ENCODE measurements at regions of chr16 and their contacts with region 1.

Region 1: DNA sequence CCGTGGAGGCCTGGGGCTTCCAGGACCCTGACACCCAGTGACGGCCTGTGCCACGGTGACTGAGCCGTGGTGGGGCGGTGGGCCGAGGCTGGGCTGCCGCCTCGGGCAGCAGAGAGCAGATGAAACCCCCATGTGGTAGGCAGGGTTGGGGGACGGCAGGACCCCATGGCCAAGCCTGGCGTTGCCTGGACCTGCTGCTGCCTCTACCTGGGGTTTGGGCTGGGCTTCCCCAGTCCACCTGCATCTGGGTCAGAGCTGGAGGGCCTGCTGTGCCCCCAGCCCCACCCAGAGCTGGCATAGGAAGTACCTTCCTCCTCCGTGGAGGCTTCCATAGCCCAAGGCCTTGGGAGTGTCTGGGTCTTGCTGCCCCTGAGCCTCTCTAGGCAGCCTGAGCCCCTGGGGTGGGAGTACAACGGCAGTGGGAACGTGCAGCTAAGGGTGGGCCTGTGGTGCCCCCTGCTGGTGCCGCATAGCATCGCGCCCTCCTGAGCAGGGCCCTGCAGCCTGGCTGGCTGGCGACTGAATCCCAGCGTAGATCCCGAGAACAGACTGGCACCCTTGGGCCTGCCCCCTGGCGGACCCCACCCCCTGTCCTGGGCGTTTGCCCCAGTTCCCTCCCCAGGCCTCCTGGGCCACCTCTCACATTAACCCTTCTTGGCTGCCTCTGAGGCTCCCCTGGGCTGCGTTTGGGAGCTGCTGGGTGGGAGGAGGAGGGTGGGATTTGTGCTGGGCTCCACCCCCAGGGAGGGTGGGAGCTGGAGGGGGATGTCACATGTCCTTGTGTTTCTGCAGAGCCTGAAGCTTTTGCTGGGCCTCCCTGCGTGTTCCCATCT is 12.6 kb upstream of the ATP6V0C start:
- H3K4me3 ChIP-seq: peak overlapping the region; percentile 27
- H3K27ac ChIP-seq: no peak overlapping the region
- H3K4me1 ChIP-seq: peaks cover 7% of the 10 kb centered on the region
- CTCF ChIP-seq: peak; percentile 99

Region 2: DNA sequence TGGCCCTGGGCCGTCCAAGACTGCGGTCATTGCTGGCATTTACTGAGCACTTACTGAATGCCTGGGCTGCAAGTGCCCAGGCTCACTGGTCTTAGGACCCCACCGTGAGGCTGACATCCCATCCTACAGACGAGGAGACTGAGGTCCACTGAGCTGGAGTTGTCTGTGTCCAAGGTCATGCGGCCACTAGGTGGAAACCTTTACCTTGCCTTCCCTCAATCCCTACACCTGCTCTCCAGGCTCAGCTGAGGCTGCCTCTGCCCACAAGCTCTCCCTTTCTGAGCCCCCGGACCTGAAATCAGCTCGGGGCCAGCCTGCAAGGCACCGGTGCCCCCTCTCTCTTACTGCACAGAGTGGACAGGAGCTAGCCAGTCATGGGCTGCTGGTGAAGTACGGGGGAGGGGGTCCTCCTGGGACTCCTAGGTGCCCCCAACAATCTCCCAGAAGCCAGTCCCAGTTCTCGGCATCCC is 306.2 kb before region 1 on chr16:
- CTCF ChIA-PET with region 1: interaction called, 28 read pairs
- POLR2A ChIA-PET with region 1: no interaction called
- H3K4me3 ChIP-seq: no peak overlapping the region
- H3K27ac ChIP-seq: no peak overlapping the region
- H3K4me1 ChIP-seq: peaks cover 9% of the 10 kb centered on the region; the same call in 1 of the 2 replicates
- CTCF ChIP-seq: peak; percentile 89

Region 3: GRCh38 chr16:2223375-2224182 is 277.6 kb before region 1 on chr16 and contains the start of gene E4F1:
- CTCF ChIA-PET with region 1: no interaction called
- POLR2A ChIA-PET with region 1: no interaction called
- H3K4me3 ChIP-seq: peak within 1 kb of the TSS; percentile 96
- H3K27ac ChIP-seq: peak within 1 kb of the TSS; percentile 94
- H3K4me1 ChIP-seq: 0 out of 2 replicates have a peak, but pooled peaks cover 2% of the 10 kb centered on the region
- CTCF ChIP-seq: no peak; the same call in 1 of the 2 replicates

Region 4: GRCh38 chr16:2459647-2460390 is 41.3 kb before region 1 on chr16 and contains the start of gene TEDC2:
- CTCF ChIA-PET with region 1: interaction called, 10 read pairs
- POLR2A ChIA-PET with region 1: interaction called, 15 read pairs
- H3K4me3 ChIP-seq: peak within 1 kb of the TSS; percentile 50
- H3K27ac ChIP-seq: peak within 1 kb of the TSS; percentile 70
- H3K4me1 ChIP-seq: peaks cover 15% of the 10 kb centered on the region
- CTCF ChIP-seq: peak; percentile 53; the same call in 1 of the 2 replicates

Region 5: DNA sequence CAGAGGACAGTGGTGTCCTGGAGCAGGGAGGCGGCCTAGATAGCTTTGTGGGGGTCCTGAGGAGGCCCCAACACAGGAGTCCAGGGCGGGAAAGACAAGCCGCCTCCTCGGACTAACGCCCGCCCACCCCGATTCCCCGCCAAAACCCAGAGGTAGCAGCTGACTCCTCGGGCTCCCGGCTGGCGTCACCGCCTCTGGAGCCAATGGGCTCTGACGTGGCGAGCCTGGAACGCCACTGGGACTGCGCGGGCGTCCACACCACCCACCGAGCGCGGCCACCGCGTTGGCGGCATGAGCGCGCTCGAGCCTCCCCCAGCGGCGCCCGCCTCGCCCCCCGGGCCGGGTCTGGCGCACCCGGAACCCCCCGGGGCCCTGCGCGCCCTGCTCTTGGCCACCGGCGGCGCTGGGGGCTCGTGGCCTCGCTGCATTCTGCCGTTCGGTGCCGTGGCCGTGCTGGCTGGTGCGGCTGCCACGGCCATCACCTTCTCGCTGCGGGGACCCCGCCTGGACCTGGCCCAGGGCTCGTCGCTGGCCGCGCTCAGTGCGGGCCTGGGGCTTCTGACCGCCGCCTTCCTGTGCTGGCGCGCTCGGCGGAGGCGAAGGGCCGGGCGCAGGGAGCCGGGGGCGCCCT is 33.5 kb before region 1 on chr16:
- CTCF ChIA-PET with region 1: interaction called, 8 read pairs
- POLR2A ChIA-PET with region 1: interaction called, 27 read pairs
- H3K4me3 ChIP-seq: peak overlapping the region; percentile 37
- H3K27ac ChIP-seq: peak overlapping the region; percentile 85
- H3K4me1 ChIP-seq: peaks cover 27% of the 10 kb centered on the region
- CTCF ChIP-seq: no peak

Region 6: DNA sequence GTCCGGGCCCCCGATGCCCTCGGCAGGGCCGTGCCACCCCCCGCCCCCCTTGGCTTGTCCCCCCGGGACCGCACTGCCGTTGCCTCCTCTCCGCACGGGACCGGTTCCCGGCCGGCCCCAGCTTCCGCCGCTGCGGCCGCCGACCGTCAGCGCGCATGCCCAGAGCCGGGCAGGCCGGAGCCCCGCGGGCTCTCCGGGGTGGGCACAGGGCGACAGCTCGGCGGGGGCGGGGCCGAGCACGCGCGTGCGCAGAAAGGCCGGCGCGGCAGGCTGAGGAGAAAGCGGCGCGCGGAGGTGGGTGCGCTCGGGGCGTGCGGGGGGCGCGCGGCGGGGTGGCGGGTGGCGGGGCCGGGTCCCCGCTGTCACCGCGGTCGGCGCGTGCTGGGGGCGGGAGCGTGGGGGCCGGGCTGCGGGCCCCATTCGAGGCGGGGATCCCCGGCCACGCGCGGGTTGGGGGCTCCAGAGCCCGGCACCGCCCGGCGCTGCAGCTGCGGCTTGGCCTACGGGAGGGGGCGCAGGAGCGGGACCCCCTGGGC is 26.2 kb before region 1 on chr16 and contains the start of gene TBC1D24:
- CTCF ChIA-PET with region 1: interaction called, 11 read pairs
- POLR2A ChIA-PET with region 1: interaction called, 10 read pairs
- H3K4me3 ChIP-seq: peak within 1 kb of the TSS; percentile 63
- H3K27ac ChIP-seq: peak within 1 kb of the TSS; percentile 79
- H3K4me1 ChIP-seq: peaks cover 15% of the 10 kb centered on the region
- CTCF ChIP-seq: no peak

Region 7: DNA sequence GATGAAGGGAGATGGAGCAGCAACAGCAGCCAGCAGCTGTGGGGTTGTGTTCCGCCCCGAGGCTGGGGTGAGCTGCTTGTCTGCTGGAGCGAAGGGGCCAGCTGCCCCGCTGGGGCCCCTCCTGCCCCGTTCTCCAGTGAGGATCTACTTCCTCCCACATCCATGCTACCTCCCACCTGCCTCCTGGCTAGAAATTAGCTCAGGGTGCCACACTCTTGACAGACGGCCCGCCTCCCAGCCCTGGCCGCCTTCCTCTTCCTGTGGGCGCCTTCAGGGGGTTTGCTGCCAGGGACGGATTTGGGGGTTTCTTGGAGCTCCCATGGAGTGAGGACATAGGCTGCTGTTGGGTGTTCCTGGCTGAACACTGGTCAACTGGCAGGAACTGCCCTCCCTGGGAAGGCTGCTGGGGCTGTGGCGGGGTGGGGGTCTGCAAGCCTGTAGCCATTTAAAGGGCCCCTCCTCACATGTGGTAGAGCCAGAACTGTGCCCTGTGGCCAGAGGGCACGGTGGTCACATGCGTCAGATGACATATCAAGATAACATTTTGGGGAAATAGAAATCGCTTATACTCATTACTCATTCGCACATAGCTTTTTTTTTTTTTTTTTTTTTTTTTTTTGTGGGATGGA is 13.1 kb before region 1 on chr16:
- CTCF ChIA-PET with region 1: interaction called, 24 read pairs
- POLR2A ChIA-PET with region 1: no interaction called
- H3K4me3 ChIP-seq: no peak overlapping the region
- H3K27ac ChIP-seq: no peak overlapping the region
- H3K4me1 ChIP-seq: no peaks in the 10 kb centered on the region; the same call in 1 of the 2 replicates
- CTCF ChIP-seq: no peak

Region 8: DNA sequence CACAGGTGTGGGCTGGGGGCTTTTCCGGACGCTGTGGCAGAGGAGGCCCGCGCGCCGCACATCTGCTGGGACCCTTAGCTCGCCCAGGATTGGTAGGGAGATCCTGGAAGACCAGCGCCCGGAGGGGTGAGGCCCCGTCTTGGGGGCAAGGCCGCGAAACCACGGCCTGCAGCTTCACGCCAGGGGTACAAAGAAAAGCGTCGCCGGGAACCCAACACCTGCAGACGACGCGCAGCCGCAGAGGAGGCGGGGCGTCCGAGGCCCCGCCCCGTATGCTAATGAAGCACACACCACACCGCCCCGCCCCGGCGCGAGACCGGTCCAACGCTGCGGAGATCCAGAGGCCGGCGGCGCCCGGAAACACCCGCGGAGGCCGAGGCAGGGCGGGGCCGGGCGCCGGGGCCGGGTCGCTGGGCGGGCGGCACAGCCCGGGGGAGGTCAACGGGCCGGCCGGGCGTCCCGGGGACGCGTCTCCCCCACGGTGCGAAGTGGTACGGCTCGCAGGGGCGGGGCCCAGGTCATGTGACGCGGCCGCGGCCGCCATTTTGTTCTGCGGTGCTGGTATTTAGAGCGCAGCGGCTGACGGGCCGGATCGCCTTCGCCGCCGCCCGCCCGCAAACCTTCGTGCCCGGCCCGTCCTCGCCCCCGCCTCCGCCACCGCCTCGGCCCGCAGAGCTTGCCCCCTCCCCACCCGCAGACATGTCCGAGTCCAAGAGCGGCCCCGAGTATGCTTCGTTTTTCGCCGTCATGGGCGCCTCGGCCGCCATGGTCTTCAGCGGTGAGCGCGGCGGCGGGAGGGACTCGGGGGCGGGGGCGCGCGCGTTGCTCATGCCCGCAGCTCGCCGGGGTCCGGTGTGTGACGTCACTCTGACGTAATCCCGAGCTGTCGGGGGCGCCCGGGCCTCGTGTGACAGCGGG is 12.5 kb after region 1 on chr16 and contains the start of gene ATP6V0C:
- CTCF ChIA-PET with region 1: interaction called, 27 read pairs
- POLR2A ChIA-PET with region 1: interaction called, 5 read pairs
- H3K4me3 ChIP-seq: peak within 1 kb of the TSS; percentile 90
- H3K27ac ChIP-seq: peak within 1 kb of the TSS; percentile 98
- H3K4me1 ChIP-seq: no peaks in the 10 kb centered on the region; the same call in 1 of the 2 replicates
- CTCF ChIP-seq: no peak

Measured in HEK293 (cell line).